AG04449 (cell line): ENCODE measurements at regions of chr3 and their contacts with region 1.

Region 1: GRCh38 chr3:100084100-100084806 is 30.0 kb downstream of the FILIP1L start:
- DNase-seq: no peak
- H3K4me3 ChIP-seq: no peak overlapping the region
- CTCF ChIP-seq: no peak

Region 2: GRCh38 chr3:100073899-100074307 is 10.3 kb before region 1 on chr3:
- CTCF ChIA-PET with region 1: interaction called, 13 read pairs
- POLR2A ChIA-PET with region 1: no interaction called
- DNase-seq: peak; percentile 82
- H3K4me3 ChIP-seq: no peak overlapping the region
- CTCF ChIP-seq: no peak

Region 3: GRCh38 chr3:100125161-100125938 is 41.1 kb after region 1 on chr3:
- CTCF ChIA-PET with region 1: no interaction called
- POLR2A ChIA-PET with region 1: no interaction called
- DNase-seq: no peak
- H3K4me3 ChIP-seq: no peak overlapping the region
- CTCF ChIP-seq: no peak

Region 4: GRCh38 chr3:100269410-100270217 is 185.4 kb after region 1 on chr3:
- CTCF ChIA-PET with region 1: no interaction called
- POLR2A ChIA-PET with region 1: no interaction called
- DNase-seq: peak; percentile 93
- H3K4me3 ChIP-seq: no peak overlapping the region
- CTCF ChIP-seq: no peak